ENCODE measurements at regions of chr5 and their contacts with region 1.

Region 1: GRCh38 chr5:59810041-59810440 is 83.5 kb downstream of the PDE4D start:
- DNase-seq: peak; percentile 70 to 86
- H3K4me3 ChIP-seq: peak overlapping the region in 1 of 2 donors; percentile 26
- H3K27ac ChIP-seq: no peak overlapping the region
- H3K4me1 ChIP-seq: peaks cover 0 to 33% (median 0%) of the 10 kb centered on the region in 4 donors
- H3K27me3 ChIP-seq: no peaks in the 10 kb centered on the region
- CTCF ChIP-seq: peak; percentile 84 to 90

Region 2: GRCh38 chr5:59587489-59588337 is 222.3 kb before region 1 on chr5:
- intact Hi-C with region 1: no loop called
- DNase-seq: peak in 1 of 2 donors; percentile 70
- H3K4me3 ChIP-seq: peak overlapping the region; percentile 35 to 44
- H3K27ac ChIP-seq: no peak overlapping the region
- H3K4me1 ChIP-seq: peaks cover 0 to 26% (median 10%) of the 10 kb centered on the region in 4 donors
- H3K27me3 ChIP-seq: no peaks in the 10 kb centered on the region
- CTCF ChIP-seq: no peak

Region 3: DNA sequence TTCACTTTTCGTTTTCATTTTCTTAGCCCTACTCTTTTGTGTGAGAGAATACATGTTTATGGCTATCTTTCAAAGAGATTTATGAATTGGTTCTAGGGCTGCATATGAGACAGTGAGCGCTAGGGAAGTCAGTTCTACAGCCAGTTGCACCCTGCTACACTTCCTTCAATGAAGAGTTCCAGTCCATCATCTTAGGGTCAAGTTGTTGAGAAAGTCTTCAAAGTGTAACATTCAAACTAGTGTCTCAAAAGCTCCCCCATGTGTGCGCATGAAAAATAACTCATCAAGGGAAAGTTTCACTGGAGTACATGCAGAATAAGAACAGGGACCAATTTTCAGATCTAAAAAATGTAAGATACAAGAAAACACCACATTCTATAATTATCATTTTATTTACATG is 572.7 kb after region 1 on chr5:
- intact Hi-C with region 1: loop called (anchors 10 kb)
- DNase-seq: no peak
- H3K4me3 ChIP-seq: no peak overlapping the region
- H3K27ac ChIP-seq: peak overlapping the region; percentile 52 to 53
- H3K4me1 ChIP-seq: peaks cover 0 to 84% (median 11%) of the 10 kb centered on the region in 4 donors
- H3K27me3 ChIP-seq: no peaks in the 10 kb centered on the region
- CTCF ChIP-seq: peak; percentile 43 to 44

Region 4: DNA sequence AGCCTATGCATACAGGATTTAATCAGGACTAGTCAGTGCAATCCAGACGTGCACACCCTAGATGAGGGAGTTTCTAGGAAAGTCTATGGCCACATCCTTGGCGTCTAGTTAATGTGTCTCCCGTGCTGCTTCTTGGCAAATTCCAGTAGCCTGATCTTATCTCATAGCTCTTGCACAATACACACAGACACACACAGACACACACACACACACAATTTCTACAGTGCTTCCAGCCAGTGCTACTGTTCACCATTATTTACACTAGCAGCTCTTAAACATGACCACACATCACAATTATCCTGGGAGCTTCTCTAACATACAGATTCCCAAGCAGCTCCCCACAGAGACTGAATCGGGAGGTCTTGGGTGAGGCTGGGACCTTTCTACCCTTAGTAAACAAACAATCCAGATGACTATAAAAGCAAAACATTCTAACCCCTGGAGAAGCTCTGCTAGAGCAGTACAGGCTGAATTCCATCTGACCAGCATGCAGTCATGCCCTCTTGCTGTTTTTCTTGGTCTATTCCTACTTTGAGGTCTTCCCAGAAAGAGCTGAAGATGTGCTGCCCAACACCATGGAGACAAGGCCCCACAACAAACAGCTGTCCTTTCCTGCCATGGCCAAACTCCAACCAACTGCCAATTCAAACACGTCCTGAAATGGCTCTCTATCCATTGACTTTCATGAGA is 653.3 kb after region 1 on chr5:
- intact Hi-C with region 1: no loop called
- DNase-seq: no peak
- H3K4me3 ChIP-seq: no peak overlapping the region
- H3K27ac ChIP-seq: peak overlapping the region in 1 of 2 donors; percentile 46
- H3K4me1 ChIP-seq: peaks cover 0 to 35% (median 8%) of the 10 kb centered on the region in 4 donors
- H3K27me3 ChIP-seq: no peaks in the 10 kb centered on the region
- CTCF ChIP-seq: no peak

Region 5: DNA sequence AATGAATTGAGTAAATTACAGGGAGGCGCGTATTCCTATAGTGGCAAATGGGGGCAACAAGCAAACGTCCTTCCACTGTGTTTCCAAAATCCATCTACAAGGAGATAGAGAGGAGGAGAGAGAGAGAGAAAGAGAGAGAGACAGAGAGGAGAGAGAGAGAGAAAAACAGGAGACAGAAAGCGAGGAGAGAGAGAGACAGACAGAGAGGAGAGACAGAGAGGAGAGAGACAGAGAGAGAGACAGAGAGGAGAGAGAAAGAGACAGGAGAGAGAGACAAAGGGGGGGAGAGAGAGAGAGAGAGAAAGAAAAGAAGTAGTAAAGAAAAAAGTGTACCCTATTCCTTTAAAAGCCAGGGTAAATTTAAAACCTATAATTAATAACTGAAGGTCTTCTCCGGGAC is 850.0 kb after region 1 on chr5:
- intact Hi-C with region 1: loop called (anchors 5 kb)
- DNase-seq: no peak
- H3K4me3 ChIP-seq: no peak overlapping the region
- H3K27ac ChIP-seq: no peak overlapping the region
- H3K4me1 ChIP-seq: no peaks in the 10 kb centered on the region
- H3K27me3 ChIP-seq: no peaks in the 10 kb centered on the region
- CTCF ChIP-seq: no peak

Region 6: GRCh38 chr5:61758711-61759495 is 1948.9 kb after region 1 on chr5:
- intact Hi-C with region 1: no loop called
- DNase-seq: no peak
- H3K4me3 ChIP-seq: no peak overlapping the region
- H3K27ac ChIP-seq: no peak overlapping the region
- H3K4me1 ChIP-seq: no peaks in the 10 kb centered on the region
- H3K27me3 ChIP-seq: no peaks in the 10 kb centered on the region
- CTCF ChIP-seq: no peak